CD4-positive, alpha-beta memory T cell (primary cell): ENCODE measurements at regions of chr7 and their contacts with region 1.

Region 1: GRCh38 chr7:150716368-150716767 is at the start of gene GIMAP1:
- DNase-seq: peak; percentile 74 to 80 (median 79)
- H3K4me3 ChIP-seq: peak within 1 kb of the TSS; percentile 74 to 83
- H3K4me3 Mint-ChIP-seq: peak within 1 kb of the TSS; percentile 94 to 100 (median 98)
- H3K27ac ChIP-seq: peak within 1 kb of the TSS; percentile 74
- H3K27ac Mint-ChIP-seq: peak within 1 kb of the TSS; percentile 88 to 98 (median 97)
- H3K4me1 ChIP-seq: peaks cover 56% of the 10 kb centered on the region
- H3K4me1 Mint-ChIP-seq: peaks cover 48 to 79% (median 65%) of the 10 kb centered on the region in 4 donors
- H3K27me3 ChIP-seq: no peaks in the 10 kb centered on the region
- H3K27me3 Mint-ChIP-seq: no peaks in the 10 kb centered on the region
- total RNA-seq, gene GIMAP1: 93.7 to 97.6 TPM

Region 2: GRCh38 chr7:150404805-150405583 is 311.4 kb before region 1 on chr7:
- CTCF ChIA-PET with region 1: no interaction called
- POLR2A ChIA-PET with region 1: interaction called, 11 read pairs
- intact Hi-C with region 1: no loop called
- DNase-seq: peak; percentile 75 to 80 (median 77)
- H3K4me3 ChIP-seq: peak overlapping the region; percentile 62 to 92
- H3K4me3 Mint-ChIP-seq: peak overlapping the region; percentile 93 to 99 (median 98)
- H3K27ac ChIP-seq: peak overlapping the region; percentile 85
- H3K27ac Mint-ChIP-seq: peak overlapping the region; percentile 80 to 99 (median 98)
- H3K4me1 ChIP-seq: peaks cover 30% of the 10 kb centered on the region
- H3K4me1 Mint-ChIP-seq: peaks cover 21 to 53% (median 39%) of the 10 kb centered on the region in 4 donors
- H3K27me3 ChIP-seq: no peaks in the 10 kb centered on the region
- H3K27me3 Mint-ChIP-seq: no peaks in the 10 kb centered on the region

Region 3: GRCh38 chr7:150520145-150520544 is 196.2 kb before region 1 on chr7:
- CTCF ChIA-PET with region 1: interaction called, 8 read pairs
- POLR2A ChIA-PET with region 1: interaction called, 200 read pairs
- intact Hi-C with region 1: no loop called
- DNase-seq: peak in 1 of 5 donors; percentile 34
- H3K4me3 ChIP-seq: peak overlapping the region; percentile 61 to 74
- H3K4me3 Mint-ChIP-seq: peak overlapping the region; percentile 97 to 100 (median 99)
- H3K27ac ChIP-seq: peak overlapping the region; percentile 62
- H3K27ac Mint-ChIP-seq: peak overlapping the region; percentile 81 to 97 (median 92)
- H3K4me1 ChIP-seq: peaks cover 18% of the 10 kb centered on the region
- H3K4me1 Mint-ChIP-seq: peaks cover 21 to 50% (median 33%) of the 10 kb centered on the region in 4 donors
- H3K27me3 ChIP-seq: no peaks in the 10 kb centered on the region
- H3K27me3 Mint-ChIP-seq: no peaks in the 10 kb centered on the region

Region 4: DNA sequence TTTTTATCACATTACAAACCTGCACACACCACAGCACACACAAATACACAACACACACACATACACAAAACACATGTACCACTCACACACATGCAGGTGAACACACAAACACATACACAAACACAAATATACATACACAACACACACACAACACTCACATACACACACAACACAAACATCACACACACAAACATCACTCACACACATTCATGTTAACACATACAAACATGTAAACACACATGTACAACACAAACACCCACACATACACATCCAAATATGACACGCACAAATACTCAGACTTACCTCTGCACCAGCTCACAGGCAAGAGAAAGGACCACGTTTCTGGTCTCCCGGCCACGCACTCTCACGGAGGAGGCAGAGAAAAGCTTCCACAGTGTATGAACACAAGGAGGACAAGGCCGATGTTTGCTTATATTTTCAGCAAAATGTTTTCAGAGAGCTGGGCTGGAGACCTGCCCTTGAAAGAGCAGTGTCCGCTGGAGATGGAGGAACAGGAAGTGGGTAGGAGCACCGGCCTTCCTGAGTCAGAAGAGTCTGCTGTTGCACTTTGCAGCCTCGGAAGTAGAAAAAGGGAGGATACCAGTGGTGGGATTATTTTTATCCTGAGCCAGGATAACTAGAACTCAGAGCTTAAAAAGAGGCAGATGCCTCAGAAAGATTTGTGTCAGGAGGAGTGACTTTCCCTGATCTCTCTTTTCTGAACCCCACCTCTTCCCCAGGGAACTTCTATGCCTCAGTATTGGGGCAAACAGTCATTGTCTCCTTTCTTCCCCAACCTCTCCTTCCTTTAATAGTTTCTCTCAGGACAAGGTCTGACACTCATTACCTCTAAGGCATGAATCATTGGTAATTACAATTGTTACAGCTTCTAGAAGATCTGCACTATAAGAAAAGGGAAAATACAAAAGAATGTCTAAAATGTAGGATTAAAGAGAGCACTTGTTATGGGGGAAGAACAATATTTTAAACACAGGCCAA is 84.2 kb before region 1 on chr7 and contains the start of gene GIMAP6:
- CTCF ChIA-PET with region 1: interaction called, 7 read pairs
- POLR2A ChIA-PET with region 1: interaction called, 172 read pairs
- intact Hi-C with region 1: loop called (anchors 1 kb)
- DNase-seq: peak; percentile 36 to 51 (median 44)
- H3K4me3 ChIP-seq: peak within 1 kb of the TSS; percentile 69 to 75
- H3K4me3 Mint-ChIP-seq: peak within 1 kb of the TSS; percentile 93 to 100 (median 98)
- H3K27ac ChIP-seq: peak within 1 kb of the TSS; percentile 64
- H3K27ac Mint-ChIP-seq: peak within 1 kb of the TSS; percentile 81 to 99 (median 95)
- H3K4me1 ChIP-seq: peaks cover 79% of the 10 kb centered on the region
- H3K4me1 Mint-ChIP-seq: peaks cover 61 to 88% (median 74%) of the 10 kb centered on the region in 4 donors
- H3K27me3 ChIP-seq: no peaks in the 10 kb centered on the region
- H3K27me3 Mint-ChIP-seq: no peaks in the 10 kb centered on the region
- total RNA-seq, gene GIMAP6: 158 to 173 TPM

Region 5: GRCh38 chr7:150675714-150676113 is 40.7 kb before region 1 on chr7:
- CTCF ChIA-PET with region 1: interaction called, 6 read pairs
- POLR2A ChIA-PET with region 1: interaction called, 72 read pairs
- intact Hi-C with region 1: no loop called
- DNase-seq: no peak
- H3K4me3 ChIP-seq: no peak overlapping the region
- H3K4me3 Mint-ChIP-seq: peak overlapping the region; percentile 39 to 89 (median 61)
- H3K27ac ChIP-seq: peak overlapping the region; percentile 18
- H3K27ac Mint-ChIP-seq: peak overlapping the region; percentile 26 to 92 (median 86)
- H3K4me1 ChIP-seq: peaks cover 75% of the 10 kb centered on the region
- H3K4me1 Mint-ChIP-seq: peaks cover 55 to 87% (median 70%) of the 10 kb centered on the region in 4 donors
- H3K27me3 ChIP-seq: no peaks in the 10 kb centered on the region
- H3K27me3 Mint-ChIP-seq: no peaks in the 10 kb centered on the region

Region 6: GRCh38 chr7:150695654-150696053 is 20.7 kb before region 1 on chr7:
- CTCF ChIA-PET with region 1: interaction called, 31 read pairs
- POLR2A ChIA-PET with region 1: interaction called, 167 read pairs
- intact Hi-C with region 1: no loop called
- DNase-seq: no peak
- H3K4me3 ChIP-seq: no peak overlapping the region
- H3K4me3 Mint-ChIP-seq: peak overlapping the region in 2 of 8 donors; percentile 57
- H3K27ac ChIP-seq: no peak overlapping the region
- H3K27ac Mint-ChIP-seq: peak overlapping the region in 1 of 7 donors; percentile 4
- H3K4me1 ChIP-seq: peaks cover 6% of the 10 kb centered on the region
- H3K4me1 Mint-ChIP-seq: peaks cover 5 to 20% (median 13%) of the 10 kb centered on the region in 4 donors
- H3K27me3 ChIP-seq: no peaks in the 10 kb centered on the region
- H3K27me3 Mint-ChIP-seq: no peaks in the 10 kb centered on the region

Region 7: GRCh38 chr7:150731916-150732315 is 15.5 kb after region 1 on chr7:
- CTCF ChIA-PET with region 1: interaction called, 26 read pairs
- POLR2A ChIA-PET with region 1: interaction called, 434 read pairs
- intact Hi-C with region 1: loop called (anchors 1 kb)
- DNase-seq: no peak
- H3K4me3 ChIP-seq: no peak overlapping the region
- H3K4me3 Mint-ChIP-seq: peak overlapping the region; percentile 9 to 95 (median 64)
- H3K27ac ChIP-seq: peak overlapping the region; percentile 6
- H3K27ac Mint-ChIP-seq: peak overlapping the region; percentile 86 to 97 (median 91)
- H3K4me1 ChIP-seq: peaks cover 76% of the 10 kb centered on the region
- H3K4me1 Mint-ChIP-seq: peaks cover 71 to 87% (median 76%) of the 10 kb centered on the region in 4 donors
- H3K27me3 ChIP-seq: no peaks in the 10 kb centered on the region
- H3K27me3 Mint-ChIP-seq: no peaks in the 10 kb centered on the region

Region 8: DNA sequence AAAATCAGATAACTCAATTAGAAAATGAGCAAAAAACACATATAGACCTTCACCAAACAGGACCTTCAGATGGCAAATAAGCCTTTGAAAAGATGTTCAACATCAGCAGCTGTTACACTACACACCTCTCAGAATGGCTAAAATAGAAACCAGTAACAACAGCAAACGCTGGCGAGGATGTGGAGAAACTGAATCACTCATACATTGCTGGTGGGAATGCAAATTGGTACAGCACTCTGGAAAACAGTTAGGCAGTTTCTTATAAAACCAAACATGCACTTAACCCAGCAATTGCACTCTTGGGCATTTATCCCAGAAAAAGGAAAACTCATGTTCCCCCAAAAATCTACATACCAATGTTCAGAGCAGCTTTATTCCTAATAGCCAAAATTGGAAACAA is 569.8 kb after region 1 on chr7:
- CTCF ChIA-PET with region 1: no interaction called
- POLR2A ChIA-PET with region 1: no interaction called
- intact Hi-C with region 1: no loop called
- DNase-seq: no peak
- H3K4me3 ChIP-seq: no peak overlapping the region
- H3K4me3 Mint-ChIP-seq: no peak overlapping the region
- H3K27ac ChIP-seq: no peak overlapping the region
- H3K27ac Mint-ChIP-seq: no peak overlapping the region
- H3K4me1 ChIP-seq: no peaks in the 10 kb centered on the region
- H3K4me1 Mint-ChIP-seq: no peaks in the 10 kb centered on the region
- H3K27me3 ChIP-seq: no peaks in the 10 kb centered on the region
- H3K27me3 Mint-ChIP-seq: peaks cover 3 to 4% of the 10 kb centered on the region in 2 donors